T-cell (primary cell): ENCODE measurements at regions of chr9 and their contacts with region 1.

Region 1: GRCh38 chr9:77651203-77651602 is 3.1 kb upstream of the GNA14 start:
- DNase-seq: no peak
- ATAC-seq: no peak
- H3K4me3 ChIP-seq: no peak overlapping the region
- H3K4me3 Mint-ChIP-seq: no peak overlapping the region
- H3K27ac ChIP-seq: no peak overlapping the region
- H3K27ac Mint-ChIP-seq: no peak overlapping the region
- H3K4me1 ChIP-seq: peaks cover 3 to 18% of the 10 kb centered on the region in 2 experiments
- H3K4me1 Mint-ChIP-seq: peaks cover 17 to 25% (median 18%) of the 10 kb centered on the region in 3 donors
- H3K27me3 ChIP-seq: peaks cover 4 to 26% of the 10 kb centered on the region in 2 experiments
- H3K27me3 Mint-ChIP-seq: peaks cover 26 to 36% of the 10 kb centered on the region in 2 donors

Region 2: GRCh38 chr9:77639396-77639795 is 11.8 kb before region 1 on chr9:
- CTCF ChIA-PET with region 1: no interaction called
- POLR2A ChIA-PET with region 1: no interaction called
- DNase-seq: no peak
- ATAC-seq: no peak
- H3K4me3 ChIP-seq: no peak overlapping the region
- H3K4me3 Mint-ChIP-seq: no peak overlapping the region
- H3K27ac ChIP-seq: no peak overlapping the region
- H3K27ac Mint-ChIP-seq: no peak overlapping the region
- H3K4me1 ChIP-seq: no peaks in the 10 kb centered on the region
- H3K4me1 Mint-ChIP-seq: no peaks in the 10 kb centered on the region
- H3K27me3 ChIP-seq: peaks cover 0 to 8% of the 10 kb centered on the region in 2 experiments
- H3K27me3 Mint-ChIP-seq: peaks cover 9 to 12% of the 10 kb centered on the region in 2 donors

Region 3: DNA sequence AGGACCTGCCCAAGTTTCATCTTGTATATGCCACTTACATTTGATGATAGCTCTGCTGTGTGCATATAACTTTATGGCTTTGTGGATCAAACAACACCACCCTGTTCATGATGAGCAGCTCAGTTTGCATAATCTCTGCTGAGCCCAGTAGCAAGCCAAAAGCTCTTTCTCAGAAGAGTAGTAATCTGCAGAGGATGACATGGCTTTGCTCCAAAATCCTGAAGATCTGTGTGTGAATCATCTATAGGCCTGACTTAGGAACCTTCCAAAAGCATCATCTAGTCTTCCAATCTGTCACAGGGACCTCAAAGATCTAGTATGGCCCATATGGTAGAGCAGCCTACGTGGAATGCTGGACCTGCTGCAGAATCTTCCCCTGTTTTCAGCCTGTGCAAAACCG is 1040.3 kb after region 1 on chr9:
- CTCF ChIA-PET with region 1: interaction called in 1 of 2 experiments, 10 read pairs
- POLR2A ChIA-PET with region 1: no interaction called
- DNase-seq: no peak
- ATAC-seq: no peak
- H3K4me3 ChIP-seq: no peak overlapping the region
- H3K4me3 Mint-ChIP-seq: no peak overlapping the region
- H3K27ac ChIP-seq: no peak overlapping the region
- H3K27ac Mint-ChIP-seq: no peak overlapping the region
- H3K4me1 ChIP-seq: no peaks in the 10 kb centered on the region
- H3K4me1 Mint-ChIP-seq: no peaks in the 10 kb centered on the region
- H3K27me3 ChIP-seq: no peaks in the 10 kb centered on the region
- H3K27me3 Mint-ChIP-seq: peaks cover 0 to 6% of the 10 kb centered on the region in 2 donors